Posterior cingulate gyrus (tissue), 11 donors: ENCODE measurements at regions of chr2 and their contacts with region 1.

Region 1: DNA sequence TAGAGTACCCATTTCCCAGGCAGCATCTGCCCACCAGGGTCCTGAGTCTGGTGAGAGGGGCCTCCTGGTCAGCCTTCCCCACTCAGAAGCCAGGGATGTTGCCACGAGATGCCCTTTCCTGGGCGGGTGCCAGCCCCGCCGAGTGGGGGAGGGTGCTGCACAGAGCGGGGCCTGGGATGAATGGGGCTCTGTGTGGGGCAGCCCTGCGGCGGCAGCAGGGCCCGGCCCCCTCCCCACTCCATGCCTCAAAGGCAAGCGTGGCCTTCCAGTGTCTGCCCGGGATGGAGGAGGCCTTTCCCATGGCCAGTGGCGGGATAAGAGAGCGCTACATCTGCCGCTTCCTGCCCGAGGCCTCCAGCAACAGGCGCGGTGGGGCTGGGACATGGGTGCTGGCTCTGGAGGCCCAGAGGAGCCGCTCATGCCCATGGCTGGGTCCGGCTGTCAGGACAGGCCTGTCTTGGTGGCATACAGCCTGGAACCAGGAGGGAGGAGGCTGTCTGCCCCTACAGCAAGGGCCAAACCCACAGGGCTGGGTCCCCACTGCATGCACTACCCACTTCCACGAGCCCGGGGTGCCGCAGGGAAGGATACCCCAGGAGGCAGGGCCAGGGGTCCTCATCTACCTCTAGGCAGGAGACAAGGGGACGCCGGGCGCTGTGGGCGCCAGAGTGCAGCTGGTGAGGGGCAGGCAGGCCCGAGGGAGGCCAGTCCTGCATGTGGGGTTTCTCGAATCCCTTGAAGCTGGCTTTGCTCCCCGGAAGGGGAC is 95.3 kb upstream of the GPC1 start:
- DNase-seq: peak; percentile 59 to 97 (median 84)

Region 2: DNA sequence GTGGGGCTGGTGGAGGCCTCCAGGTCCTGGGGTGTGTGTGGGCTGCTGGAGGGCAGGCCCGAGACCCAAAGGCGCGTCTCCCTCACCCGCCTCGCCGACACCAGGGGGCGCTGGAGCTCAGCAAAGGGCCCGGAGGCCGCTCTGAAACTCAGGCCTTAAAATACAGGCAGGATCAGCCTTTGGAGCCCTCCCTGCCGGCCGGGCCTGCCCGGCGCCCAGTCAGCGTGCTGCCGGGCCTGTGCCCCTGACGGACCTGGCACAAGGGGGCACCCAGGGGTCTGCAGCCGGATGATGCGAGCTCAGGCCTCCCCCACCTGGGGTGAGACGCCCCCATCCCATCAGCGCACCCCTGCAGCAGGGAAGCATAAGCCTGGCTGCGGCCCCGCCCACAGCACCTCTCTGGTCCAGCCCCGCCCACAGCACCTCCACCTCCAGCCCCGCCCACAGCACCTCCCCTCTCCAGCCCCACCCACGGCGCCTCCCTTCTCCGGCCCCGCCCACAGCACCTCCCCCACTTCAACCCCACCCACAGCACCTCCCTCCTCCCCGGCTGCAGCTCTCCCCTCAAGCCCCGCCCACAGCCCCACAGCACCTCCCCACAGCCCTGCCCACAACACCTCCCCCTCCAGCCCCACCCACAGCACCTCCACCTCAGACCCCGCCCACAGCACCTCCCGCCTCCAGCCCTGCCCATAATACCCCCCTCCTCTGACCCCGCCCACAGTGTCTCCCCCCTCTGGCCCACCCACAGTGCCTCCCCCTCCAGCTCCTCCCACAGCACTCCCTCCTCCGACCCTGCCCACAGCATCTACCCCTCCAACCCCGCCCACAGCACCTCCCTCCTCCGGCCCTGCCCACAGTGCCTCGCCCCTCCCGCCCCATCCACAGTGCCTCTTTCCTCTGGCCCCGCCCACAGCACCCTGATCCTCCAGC is 107.0 kb before region 1 on chr2:
- intact Hi-C with region 1: loop called (anchors 10 kb)
- DNase-seq: peak; percentile 58 to 97 (median 86)